Activated CD4-positive, alpha-beta memory T cell treated with anti-CD3 and anti-CD28 coated beads for 36 hours (primary cell): ENCODE measurements at regions of chr11 and their contacts with region 1.

Region 1: DNA sequence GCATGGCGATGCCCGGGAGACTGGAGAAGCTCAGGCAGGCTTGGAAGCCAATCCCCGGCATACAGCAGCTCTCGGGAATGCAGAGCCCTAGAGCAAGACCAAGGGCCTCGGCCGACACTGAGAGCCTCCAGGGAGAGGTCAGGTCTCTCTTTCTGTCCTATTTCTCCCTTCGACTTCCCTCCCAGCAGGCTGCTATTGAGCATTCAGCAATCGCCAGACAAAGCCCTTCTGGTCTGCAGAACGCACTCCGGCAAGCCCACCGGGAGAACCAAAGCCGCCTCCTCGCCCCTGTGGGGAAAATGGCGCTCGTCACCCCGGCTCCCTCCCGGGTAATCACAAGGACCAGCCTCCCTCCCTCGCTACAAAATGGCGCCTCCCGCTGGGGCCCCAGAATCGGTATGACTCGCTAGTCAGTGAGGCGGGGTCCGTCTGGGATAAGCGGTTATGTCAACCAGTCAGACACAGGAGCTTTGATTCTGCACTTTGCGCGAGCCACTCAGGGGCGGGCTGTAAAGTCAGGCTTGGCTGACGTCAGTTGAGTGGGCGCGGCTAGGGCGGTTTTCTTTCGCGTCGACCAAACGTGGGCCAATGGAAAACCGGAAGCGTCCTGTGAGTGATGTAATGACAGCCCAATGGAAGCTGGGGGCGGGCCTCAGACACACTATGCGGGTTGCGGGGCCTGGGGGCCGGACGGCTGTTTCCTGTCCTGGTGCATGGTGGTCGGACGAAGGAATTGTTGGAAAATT is at the start of gene ZNF143:
- DNase-seq: peak; percentile 100
- H3K4me3 Mint-ChIP-seq: peak within 1 kb of the TSS; percentile 95
- H3K27ac Mint-ChIP-seq: peak within 1 kb of the TSS; percentile 99
- H3K4me1 Mint-ChIP-seq: peaks cover 21% of the 10 kb centered on the region
- H3K27me3 Mint-ChIP-seq: no peaks in the 10 kb centered on the region
- total RNA-seq, gene ZNF143: 45.4 to 48.2 TPM

Region 2: GRCh38 chr11:8682303-8683114 is 778.0 kb before region 1 on chr11 and contains the starts of genes RPL27A and TRIM66:
- CTCF ChIA-PET with region 1: no interaction called
- POLR2A ChIA-PET with region 1: interaction called, 11 read pairs
- intact Hi-C with region 1: loop called (anchors 2 kb)
- DNase-seq: peak; percentile 99
- H3K4me3 Mint-ChIP-seq: peak within 1 kb of the TSS; percentile 94
- H3K27ac Mint-ChIP-seq: peak within 1 kb of the TSS; percentile 88
- H3K4me1 Mint-ChIP-seq: peaks cover 45% of the 10 kb centered on the region
- H3K27me3 Mint-ChIP-seq: no peaks in the 10 kb centered on the region
- total RNA-seq, gene RPL27A: 1,027 to 1,094 TPM
- total RNA-seq, gene TRIM66: 18.3 to 24.2 TPM

Region 3: GRCh38 chr11:9210922-9211320 is 249.6 kb before region 1 on chr11:
- CTCF ChIA-PET with region 1: no interaction called
- POLR2A ChIA-PET with region 1: interaction called, 5 read pairs
- intact Hi-C with region 1: loop called (anchors 2 kb)
- DNase-seq: peak; percentile 43
- H3K4me3 Mint-ChIP-seq: no peak overlapping the region
- H3K27ac Mint-ChIP-seq: peak overlapping the region; percentile 75
- H3K4me1 Mint-ChIP-seq: peaks cover 66% of the 10 kb centered on the region
- H3K27me3 Mint-ChIP-seq: no peaks in the 10 kb centered on the region

Region 4: GRCh38 chr11:9314291-9315036 is 146.0 kb before region 1 on chr11 and contains the start of gene TMEM41B:
- CTCF ChIA-PET with region 1: no interaction called
- POLR2A ChIA-PET with region 1: interaction called, 10 read pairs
- intact Hi-C with region 1: loop called (anchors 1 kb)
- DNase-seq: peak; percentile 99
- H3K4me3 Mint-ChIP-seq: peak within 1 kb of the TSS; percentile 97
- H3K27ac Mint-ChIP-seq: peak within 1 kb of the TSS; percentile 95
- H3K4me1 Mint-ChIP-seq: peaks cover 33% of the 10 kb centered on the region
- H3K27me3 Mint-ChIP-seq: peaks cover 10% of the 10 kb centered on the region
- total RNA-seq, gene TMEM41B: 33.6 to 36.1 TPM

Region 5: DNA sequence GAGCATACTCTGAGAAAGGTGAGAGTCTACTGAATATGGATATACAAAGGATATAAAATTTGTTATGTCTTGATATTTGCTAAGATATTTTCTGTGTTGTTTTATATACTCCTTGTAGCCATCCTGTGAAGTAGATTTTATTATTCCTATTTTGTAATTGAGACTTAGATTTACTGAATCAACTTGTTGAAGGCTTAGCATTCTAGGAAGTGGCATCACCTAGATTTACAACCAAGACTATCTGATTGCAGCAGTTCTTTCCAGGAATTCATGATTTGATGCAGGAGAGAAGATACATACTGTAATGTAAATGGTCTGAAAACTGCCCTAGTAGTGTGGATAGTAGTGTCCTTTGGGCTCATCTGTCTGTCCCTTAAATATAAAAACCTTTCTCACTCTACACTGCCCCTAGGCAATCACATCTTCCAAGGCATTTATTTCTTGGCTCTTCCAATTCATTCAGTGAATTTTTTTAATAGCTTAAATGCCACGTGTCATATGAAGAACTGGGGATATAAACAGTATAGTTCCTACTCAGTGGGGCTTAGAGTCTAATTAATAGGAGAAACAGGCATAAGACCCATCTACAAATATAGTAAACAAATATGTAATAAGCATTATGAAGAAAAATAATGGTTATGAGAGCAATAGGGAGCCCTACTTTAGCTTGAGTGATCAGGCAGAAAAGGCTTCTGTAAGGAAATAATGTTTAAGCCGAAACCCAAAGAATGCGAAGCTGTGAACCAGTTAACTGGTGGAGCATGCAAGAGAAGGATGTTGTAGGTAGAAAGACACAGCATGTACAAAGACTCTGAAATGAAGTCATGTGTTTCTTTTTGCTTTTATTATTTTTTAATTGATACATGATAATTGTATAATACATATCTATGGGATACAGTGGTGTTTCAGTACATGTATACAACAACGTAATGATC is 62.5 kb before region 1 on chr11:
- CTCF ChIA-PET with region 1: no interaction called
- POLR2A ChIA-PET with region 1: no interaction called
- intact Hi-C with region 1: no loop called
- DNase-seq: no peak
- H3K4me3 Mint-ChIP-seq: no peak overlapping the region
- H3K27ac Mint-ChIP-seq: peak overlapping the region; percentile 34
- H3K4me1 Mint-ChIP-seq: peaks cover 47% of the 10 kb centered on the region
- H3K27me3 Mint-ChIP-seq: no peaks in the 10 kb centered on the region

Region 6: DNA sequence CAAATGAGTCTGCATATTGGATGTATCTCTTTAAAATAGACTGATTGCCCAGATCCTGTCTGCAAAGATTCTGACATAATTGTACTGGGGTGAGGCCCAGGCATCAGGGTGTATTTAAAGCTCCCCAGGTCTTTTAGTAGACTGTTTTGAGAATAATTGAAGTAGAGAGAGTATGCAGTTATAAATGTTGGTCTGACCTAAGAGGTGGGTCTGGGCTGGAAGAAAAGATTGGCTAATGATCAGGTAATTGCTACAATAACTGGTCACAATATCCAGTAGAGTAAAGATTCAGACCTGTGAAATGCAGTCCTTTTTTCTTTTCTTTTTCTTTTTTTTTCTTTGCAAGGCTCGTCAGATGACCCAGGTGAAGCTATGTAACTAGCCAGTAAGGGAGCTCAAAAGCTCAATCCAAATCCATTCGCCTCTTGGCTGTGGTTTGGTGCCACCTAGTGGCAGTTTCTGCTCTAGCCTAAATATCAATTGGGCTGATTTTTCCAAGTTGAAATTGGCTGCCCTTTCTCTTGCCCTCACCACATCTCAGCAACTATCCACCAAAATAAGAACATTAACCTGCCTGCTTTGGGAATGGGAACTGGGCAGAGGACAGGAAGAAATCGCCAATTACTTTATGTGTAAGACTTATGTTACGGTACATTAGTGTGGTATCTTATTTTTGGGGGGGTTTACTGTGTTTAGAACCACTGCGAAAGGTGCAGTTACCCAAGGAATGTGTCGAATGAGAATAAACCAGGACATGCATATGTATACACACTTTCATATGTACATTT is 46.2 kb after region 1 on chr11:
- CTCF ChIA-PET with region 1: interaction called, 19 read pairs
- POLR2A ChIA-PET with region 1: interaction called, 4 read pairs
- intact Hi-C with region 1: no loop called
- DNase-seq: peak; percentile 82
- H3K4me3 Mint-ChIP-seq: no peak overlapping the region
- H3K27ac Mint-ChIP-seq: no peak overlapping the region
- H3K4me1 Mint-ChIP-seq: peaks cover 11% of the 10 kb centered on the region
- H3K27me3 Mint-ChIP-seq: no peaks in the 10 kb centered on the region

Region 7: DNA sequence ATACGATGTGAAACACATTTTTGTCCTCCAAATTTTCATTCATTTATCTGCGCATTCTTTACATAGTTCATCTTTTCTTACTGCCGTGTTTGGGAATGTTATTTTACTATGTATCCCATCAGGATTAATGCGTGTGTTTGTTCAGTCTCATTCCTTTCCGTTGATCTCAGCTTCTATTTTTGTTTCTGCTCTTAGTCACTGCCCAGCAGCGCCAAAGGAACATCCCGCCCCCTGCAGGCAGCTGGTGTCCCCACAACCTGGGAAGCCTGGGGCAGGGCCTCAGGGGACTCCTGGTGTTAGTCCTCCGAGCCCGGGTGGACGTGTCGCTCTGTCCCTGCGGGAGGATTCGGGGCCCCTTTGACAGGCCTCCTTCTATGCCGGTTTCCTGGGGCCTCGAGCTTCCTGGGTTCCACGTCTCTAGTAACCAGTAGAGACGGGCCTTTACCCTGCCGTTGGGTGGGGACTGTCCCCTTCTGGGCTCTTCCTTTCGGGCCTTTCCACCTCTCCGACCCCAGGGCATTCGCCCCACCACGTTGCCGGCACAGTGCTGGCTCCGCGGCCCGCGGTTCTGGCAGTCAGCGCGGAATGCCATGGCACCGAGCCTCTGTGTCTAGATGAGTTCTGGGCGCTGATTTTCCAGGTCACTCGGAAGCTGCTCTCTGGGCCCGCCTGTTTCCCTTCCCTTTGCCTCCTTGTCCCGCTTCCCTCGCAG is 152.8 kb after region 1 on chr11:
- CTCF ChIA-PET with region 1: interaction called, 4 read pairs
- POLR2A ChIA-PET with region 1: interaction called, 6 read pairs
- intact Hi-C with region 1: loop called (anchors 1 kb)
- DNase-seq: peak; percentile 93
- H3K4me3 Mint-ChIP-seq: peak overlapping the region; percentile 81
- H3K27ac Mint-ChIP-seq: peak overlapping the region; percentile 97
- H3K4me1 Mint-ChIP-seq: peaks cover 34% of the 10 kb centered on the region
- H3K27me3 Mint-ChIP-seq: no peaks in the 10 kb centered on the region

Region 8: DNA sequence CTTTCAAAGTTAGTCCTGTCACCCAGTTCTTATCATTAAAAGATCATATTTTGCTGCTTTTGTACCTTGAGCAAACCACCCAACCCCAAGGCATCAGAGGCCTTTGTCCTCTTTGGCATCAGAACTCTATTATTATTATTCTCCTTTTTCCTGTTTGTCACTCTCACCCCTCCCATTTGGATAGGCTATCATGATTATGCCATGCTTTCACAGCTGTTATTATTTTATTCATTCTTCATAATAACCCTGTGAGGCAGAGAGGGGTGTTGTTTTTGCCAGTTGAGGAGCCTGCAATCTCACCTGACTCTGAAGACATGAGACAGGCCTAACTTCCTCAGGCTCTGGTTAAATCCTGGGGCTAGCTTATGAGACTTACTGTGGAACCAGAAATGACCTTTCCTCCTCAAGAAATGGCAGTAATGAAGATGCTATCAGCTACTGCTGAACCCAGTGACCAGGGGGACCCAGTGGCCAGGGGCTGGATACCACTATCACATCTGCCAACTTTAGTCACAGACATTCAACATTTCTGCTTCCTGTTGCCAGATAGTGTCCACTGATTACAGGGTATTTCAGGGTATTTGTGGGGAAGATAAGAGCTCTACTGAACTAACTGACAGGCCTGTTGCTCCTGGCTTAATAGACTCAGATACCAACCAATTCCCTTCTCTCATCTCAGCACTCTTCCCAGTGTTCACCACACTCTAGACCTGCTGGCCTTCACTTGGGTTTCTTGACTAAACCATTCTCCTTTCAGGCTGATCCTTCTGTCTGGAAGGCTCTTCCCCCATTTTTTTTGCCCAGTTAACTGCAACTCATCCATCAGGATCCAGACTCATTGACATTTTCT is 191.6 kb after region 1 on chr11:
- CTCF ChIA-PET with region 1: no interaction called
- POLR2A ChIA-PET with region 1: no interaction called
- intact Hi-C with region 1: no loop called
- DNase-seq: no peak
- H3K4me3 Mint-ChIP-seq: no peak overlapping the region
- H3K27ac Mint-ChIP-seq: no peak overlapping the region
- H3K4me1 Mint-ChIP-seq: no peaks in the 10 kb centered on the region
- H3K27me3 Mint-ChIP-seq: no peaks in the 10 kb centered on the region

Region 9: DNA sequence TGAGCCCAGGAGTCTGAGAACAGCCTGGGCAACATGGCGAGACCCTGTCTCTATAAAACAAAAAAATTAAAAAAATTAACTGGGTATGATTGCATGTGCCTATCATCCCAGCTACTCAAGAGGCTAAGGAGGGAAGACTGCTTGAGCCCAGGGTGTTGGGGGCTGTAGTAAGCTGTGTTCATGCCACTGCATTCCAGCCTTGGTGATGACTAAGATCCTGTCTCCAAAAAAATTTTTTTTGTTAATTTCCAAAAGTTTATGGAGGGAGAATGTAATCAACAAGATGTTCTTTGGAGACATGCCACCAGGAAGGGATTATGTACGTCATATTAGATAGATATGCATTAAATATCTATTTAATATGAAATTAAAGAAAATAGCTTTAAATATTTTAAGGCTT is 566.0 kb after region 1 on chr11:
- CTCF ChIA-PET with region 1: no interaction called
- POLR2A ChIA-PET with region 1: no interaction called
- intact Hi-C with region 1: no loop called
- DNase-seq: no peak
- H3K4me3 Mint-ChIP-seq: no peak overlapping the region
- H3K27ac Mint-ChIP-seq: no peak overlapping the region
- H3K4me1 Mint-ChIP-seq: peaks cover 2% of the 10 kb centered on the region
- H3K27me3 Mint-ChIP-seq: no peaks in the 10 kb centered on the region

Region 10: GRCh38 chr11:10455637-10456487 is 995.4 kb after region 1 on chr11:
- CTCF ChIA-PET with region 1: no interaction called
- POLR2A ChIA-PET with region 1: interaction called, 4 read pairs
- intact Hi-C with region 1: loop called (anchors 5 kb)
- DNase-seq: peak; percentile 89
- H3K4me3 Mint-ChIP-seq: peak overlapping the region; percentile 79
- H3K27ac Mint-ChIP-seq: peak overlapping the region; percentile 93
- H3K4me1 Mint-ChIP-seq: peaks cover 83% of the 10 kb centered on the region
- H3K27me3 Mint-ChIP-seq: no peaks in the 10 kb centered on the region